Head of caudate nucleus (tissue), 42 donors: ENCODE measurements at regions of chr12 and their contacts with region 1.

Region 1: GRCh38 chr12:42568952-42569915 is 20.3 kb downstream of the PRICKLE1 start:
- DNase-seq: peak in 2 of 42 donors; percentile 23 to 38

Region 2: GRCh38 chr12:42156232-42156631 is 413.0 kb before region 1 on chr12:
- intact Hi-C with region 1: no loop called
- DNase-seq: no peak

Region 3: DNA sequence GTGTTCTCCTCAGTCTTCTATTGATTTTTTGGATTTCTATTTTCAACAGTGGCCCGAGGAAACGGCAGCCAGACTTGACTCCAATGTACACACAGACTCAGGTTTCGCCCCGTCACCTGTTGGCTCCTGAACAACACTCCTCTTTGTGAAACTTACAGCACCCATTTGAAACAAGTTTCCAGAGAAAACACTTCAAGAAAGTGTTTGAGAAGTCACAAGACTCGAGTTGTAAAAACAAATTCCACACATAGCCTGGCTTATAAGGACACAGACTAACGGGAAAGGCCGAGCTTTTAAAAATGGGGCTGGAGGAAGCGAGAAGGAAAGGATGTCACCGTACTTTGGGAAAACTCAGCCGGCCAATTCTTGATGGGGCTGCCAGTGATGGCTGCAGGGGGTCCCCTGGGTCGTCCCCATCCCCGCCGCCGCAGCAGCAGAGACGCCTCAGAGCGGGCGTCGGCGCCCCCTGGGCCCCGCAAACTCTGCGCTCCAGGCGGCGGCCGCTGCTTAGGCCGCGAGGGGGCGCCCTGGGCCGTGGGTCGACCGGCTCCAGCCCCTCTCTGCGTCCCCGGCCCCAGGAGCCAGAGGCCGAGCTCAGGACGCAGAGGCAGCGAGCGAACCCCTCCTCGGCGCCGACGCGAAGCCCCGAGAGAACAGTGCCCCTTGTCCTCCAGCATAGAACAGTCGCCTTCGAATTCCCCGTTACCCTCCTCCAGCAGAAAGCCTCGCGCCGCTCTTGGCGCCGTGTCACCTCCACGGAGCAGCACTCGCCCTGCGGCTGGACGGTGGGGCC is 86.6 kb before region 1 on chr12:
- intact Hi-C with region 1: loop called (anchors 5 kb)
- DNase-seq: peak in 41 of 42 donors; percentile 16 to 84 (median 68)

Region 4: DNA sequence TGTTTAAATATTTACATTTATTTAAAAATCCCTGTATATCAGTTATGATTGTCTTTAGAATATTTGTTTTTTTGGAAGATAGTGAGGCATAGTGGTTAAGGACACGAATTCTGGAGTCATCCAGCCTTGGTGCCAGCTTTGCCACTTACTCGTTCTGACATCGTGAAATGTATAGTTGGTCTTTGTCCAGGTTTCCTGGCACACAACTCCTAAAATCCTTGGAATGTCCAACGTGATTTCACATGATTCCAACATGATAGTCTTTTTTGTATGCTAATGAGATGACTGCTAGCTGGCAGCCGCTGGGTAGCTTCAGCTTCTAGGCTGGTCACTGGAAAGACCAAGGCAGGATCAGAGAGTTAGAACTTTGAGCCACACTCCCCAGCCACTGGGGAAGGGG is 44.5 kb before region 1 on chr12:
- intact Hi-C with region 1: no loop called
- DNase-seq: no peak